ENCODE measurements at regions of chr1 and their contacts with region 1.

Region 1: GRCh38 chr1:155208541-155209311 is at the start of gene MTX1:
- DNase-seq: no peak
- ATAC-seq: peak; percentile 76
- H3K4me3 ChIP-seq: peak within 1 kb of the TSS; percentile 89 to 100
- H3K27ac ChIP-seq: peak within 1 kb of the TSS; percentile 90
- H3K4me1 ChIP-seq: peaks cover 22 to 33% of the 10 kb centered on the region in 2 experiments
- H3K27me3 ChIP-seq: no peaks in the 10 kb centered on the region
- CTCF ChIP-seq: no peak
- POLR2A ChIP-seq: no peak
- RAD21 ChIP-seq: no peak
- total RNA-seq, gene MTX1: 69.1 TPM

Region 2: GRCh38 chr1:155061381-155062150 is 147.2 kb before region 1 on chr1:
- CTCF ChIA-PET with region 1: no interaction called
- POLR2A ChIA-PET with region 1: no interaction called
- RAD21 ChIA-PET with region 1: no interaction called
- intact Hi-C with region 1: no loop called
- DNase-seq: peak; percentile 73
- ATAC-seq: peak; percentile 50
- H3K4me3 ChIP-seq: no peak overlapping the region
- H3K27ac ChIP-seq: peak overlapping the region; percentile 56
- H3K4me1 ChIP-seq: peaks cover 21 to 35% of the 10 kb centered on the region in 2 experiments
- H3K27me3 ChIP-seq: no peaks in the 10 kb centered on the region
- CTCF ChIP-seq: peak; percentile 82 to 99 (median 98)
- POLR2A ChIP-seq: no peak
- RAD21 ChIP-seq: peak; percentile 98

Region 3: DNA sequence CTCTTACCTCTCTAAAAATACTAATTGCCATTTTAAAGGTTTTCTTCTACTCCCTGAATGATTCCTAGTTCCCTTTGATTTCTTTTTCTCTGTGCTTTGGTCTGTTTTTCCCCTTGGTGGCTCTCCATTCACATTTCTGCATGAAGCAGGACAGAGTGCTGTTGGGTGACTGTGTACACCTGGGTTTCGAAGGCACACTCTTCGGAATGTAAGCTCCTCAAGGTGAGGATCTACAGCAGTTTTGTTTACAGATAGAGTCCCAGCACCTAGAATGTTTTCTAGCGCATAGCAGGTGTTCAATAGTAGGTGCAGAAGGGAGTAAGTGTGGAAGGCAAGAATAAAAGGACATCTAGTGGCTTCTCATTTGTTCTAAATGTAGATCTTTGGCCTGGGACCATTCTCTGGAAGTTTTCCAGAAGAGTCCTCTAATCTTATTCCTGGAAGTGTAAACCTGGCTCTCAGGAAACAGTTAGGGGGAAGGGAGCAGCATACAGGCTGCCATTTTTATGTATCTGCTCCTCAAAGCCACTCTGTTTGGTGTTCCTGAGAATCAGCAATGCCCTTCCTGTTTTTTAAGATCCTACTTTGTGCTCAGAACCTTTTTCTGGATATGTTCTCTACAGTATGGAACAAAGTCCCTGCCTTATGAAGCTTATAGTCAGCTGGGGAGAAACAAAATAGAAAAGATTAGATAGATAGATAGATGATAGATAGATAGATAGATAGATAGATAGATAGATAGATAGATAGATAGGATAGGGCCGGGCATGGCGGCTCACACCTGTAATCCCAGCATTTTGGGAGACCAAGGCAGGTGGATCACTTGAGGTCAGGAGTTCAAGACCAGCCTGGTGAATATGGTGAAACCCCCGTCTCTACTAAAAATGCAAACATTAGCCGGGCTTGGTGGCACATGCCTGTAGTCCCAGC is 103.9 kb before region 1 on chr1:
- CTCF ChIA-PET with region 1: no interaction called
- POLR2A ChIA-PET with region 1: no interaction called
- RAD21 ChIA-PET with region 1: no interaction called
- intact Hi-C with region 1: no loop called
- DNase-seq: no peak
- ATAC-seq: no peak
- H3K4me3 ChIP-seq: no peak overlapping the region
- H3K27ac ChIP-seq: no peak overlapping the region
- H3K4me1 ChIP-seq: no peaks in the 10 kb centered on the region
- H3K27me3 ChIP-seq: no peaks in the 10 kb centered on the region
- CTCF ChIP-seq: no peak
- POLR2A ChIP-seq: no peak
- RAD21 ChIP-seq: no peak

Region 4: GRCh38 chr1:155193275-155193990 is 15.3 kb before region 1 on chr1:
- CTCF ChIA-PET with region 1: interaction called, 16 read pairs
- POLR2A ChIA-PET with region 1: interaction called, 9 read pairs
- RAD21 ChIA-PET with region 1: no interaction called
- intact Hi-C with region 1: no loop called
- DNase-seq: peak; percentile 79
- ATAC-seq: peak; percentile 78
- H3K4me3 ChIP-seq: peak overlapping the region; percentile 65 to 66
- H3K27ac ChIP-seq: peak overlapping the region; percentile 97
- H3K4me1 ChIP-seq: peaks cover 15 to 36% of the 10 kb centered on the region in 2 experiments; a peak in 3 of 4 replicates
- H3K27me3 ChIP-seq: no peaks in the 10 kb centered on the region
- CTCF ChIP-seq: peak in 2 of 3 experiments; percentile 97 to 99; a peak in 4 of 6 replicates
- POLR2A ChIP-seq: peak; percentile 30
- RAD21 ChIP-seq: no peak

Region 5: GRCh38 chr1:155227261-155228095 is 18.8 kb after region 1 on chr1:
- CTCF ChIA-PET with region 1: interaction called, 4 read pairs
- POLR2A ChIA-PET with region 1: interaction called, 5 read pairs
- RAD21 ChIA-PET with region 1: no interaction called
- intact Hi-C with region 1: loop called (anchors 2 kb)
- DNase-seq: peak; percentile 97
- ATAC-seq: peak; percentile 95
- H3K4me3 ChIP-seq: peak overlapping the region; percentile 63 to 69
- H3K27ac ChIP-seq: peak overlapping the region; percentile 95
- H3K4me1 ChIP-seq: peaks cover 17 to 43% of the 10 kb centered on the region in 2 experiments
- H3K27me3 ChIP-seq: no peaks in the 10 kb centered on the region
- CTCF ChIP-seq: no peak
- POLR2A ChIP-seq: peak; percentile 91
- RAD21 ChIP-seq: no peak

Region 6: DNA sequence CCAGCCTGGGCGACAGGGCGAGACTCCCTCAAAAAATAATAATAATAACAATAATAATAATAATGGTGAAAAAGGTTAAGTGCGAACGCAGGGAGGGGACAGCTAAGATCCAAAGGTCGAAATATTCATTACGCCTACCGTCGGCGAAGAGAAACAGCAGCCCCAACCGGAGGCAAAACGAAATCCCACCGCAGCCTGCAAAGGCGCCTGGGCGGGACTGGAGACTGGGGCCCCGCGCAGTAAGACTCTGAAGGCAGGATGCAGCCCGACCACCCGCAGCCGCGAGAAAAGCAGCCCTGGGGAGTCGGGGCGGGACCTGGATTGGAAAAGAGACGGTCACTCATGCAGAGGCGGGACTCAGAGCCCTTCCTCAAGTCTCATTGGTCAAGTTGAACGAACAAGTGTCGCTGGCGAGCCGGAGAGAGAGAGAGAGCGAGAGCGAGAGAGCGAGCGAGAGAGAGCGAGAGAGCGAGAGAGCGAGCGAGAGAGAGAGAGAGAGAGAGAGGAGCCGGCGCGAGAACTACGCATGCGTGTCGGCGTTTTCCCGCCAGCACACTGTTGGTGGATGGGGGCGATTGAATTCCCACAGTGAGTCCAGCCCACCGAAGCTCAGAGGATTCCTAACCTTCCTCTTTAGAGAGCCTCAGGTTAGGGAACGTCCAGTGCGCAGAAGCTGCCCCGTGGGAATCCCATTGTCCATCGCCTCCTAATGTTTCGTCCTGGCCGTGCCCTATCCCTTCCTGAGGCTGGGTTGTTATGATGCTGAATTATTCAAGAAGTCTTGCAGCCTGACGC is 35.8 kb after region 1 on chr1:
- CTCF ChIA-PET with region 1: interaction called, 13 read pairs
- POLR2A ChIA-PET with region 1: interaction called, 3 read pairs
- RAD21 ChIA-PET with region 1: no interaction called
- intact Hi-C with region 1: loop called (anchors 5 kb)
- DNase-seq: peak; percentile 99
- ATAC-seq: peak; percentile 91
- H3K4me3 ChIP-seq: peak overlapping the region; percentile 69 to 74
- H3K27ac ChIP-seq: peak overlapping the region; percentile 78
- H3K4me1 ChIP-seq: peaks cover 16 to 46% of the 10 kb centered on the region in 2 experiments
- H3K27me3 ChIP-seq: no peaks in the 10 kb centered on the region
- CTCF ChIP-seq: peak in 1 of 3 experiments; percentile 14; a peak in 2 of 6 replicates
- POLR2A ChIP-seq: peak; percentile 95
- RAD21 ChIP-seq: no peak

Region 7: DNA sequence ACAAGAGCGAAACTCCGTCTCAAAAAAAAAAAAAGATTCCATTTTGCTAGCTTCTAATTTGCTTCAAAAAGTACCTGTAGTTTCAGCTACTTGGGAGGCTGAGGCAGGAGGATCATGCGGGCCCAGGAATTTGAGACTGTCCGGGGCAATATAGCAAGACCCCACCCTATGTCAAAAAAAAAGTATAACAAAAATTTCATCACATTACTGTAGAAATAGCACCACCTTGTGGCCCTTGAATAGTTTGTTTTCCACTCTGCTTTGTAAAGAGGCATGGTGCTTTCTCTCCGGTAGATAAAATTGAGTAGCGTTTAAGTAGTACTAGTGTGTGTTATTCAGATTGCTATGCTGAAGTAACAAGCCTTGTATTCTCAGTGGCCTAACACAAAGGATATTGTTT is 383.0 kb after region 1 on chr1:
- CTCF ChIA-PET with region 1: no interaction called
- POLR2A ChIA-PET with region 1: no interaction called
- RAD21 ChIA-PET with region 1: no interaction called
- intact Hi-C with region 1: loop called (anchors 5 kb)
- DNase-seq: peak; percentile 70
- ATAC-seq: peak; percentile 83
- H3K4me3 ChIP-seq: no peak overlapping the region
- H3K27ac ChIP-seq: no peak overlapping the region
- H3K4me1 ChIP-seq: no peaks in the 10 kb centered on the region
- H3K27me3 ChIP-seq: no peaks in the 10 kb centered on the region
- CTCF ChIP-seq: peak; percentile 40 to 84 (median 59)
- POLR2A ChIP-seq: no peak
- RAD21 ChIP-seq: peak; percentile 84

Region 8: DNA sequence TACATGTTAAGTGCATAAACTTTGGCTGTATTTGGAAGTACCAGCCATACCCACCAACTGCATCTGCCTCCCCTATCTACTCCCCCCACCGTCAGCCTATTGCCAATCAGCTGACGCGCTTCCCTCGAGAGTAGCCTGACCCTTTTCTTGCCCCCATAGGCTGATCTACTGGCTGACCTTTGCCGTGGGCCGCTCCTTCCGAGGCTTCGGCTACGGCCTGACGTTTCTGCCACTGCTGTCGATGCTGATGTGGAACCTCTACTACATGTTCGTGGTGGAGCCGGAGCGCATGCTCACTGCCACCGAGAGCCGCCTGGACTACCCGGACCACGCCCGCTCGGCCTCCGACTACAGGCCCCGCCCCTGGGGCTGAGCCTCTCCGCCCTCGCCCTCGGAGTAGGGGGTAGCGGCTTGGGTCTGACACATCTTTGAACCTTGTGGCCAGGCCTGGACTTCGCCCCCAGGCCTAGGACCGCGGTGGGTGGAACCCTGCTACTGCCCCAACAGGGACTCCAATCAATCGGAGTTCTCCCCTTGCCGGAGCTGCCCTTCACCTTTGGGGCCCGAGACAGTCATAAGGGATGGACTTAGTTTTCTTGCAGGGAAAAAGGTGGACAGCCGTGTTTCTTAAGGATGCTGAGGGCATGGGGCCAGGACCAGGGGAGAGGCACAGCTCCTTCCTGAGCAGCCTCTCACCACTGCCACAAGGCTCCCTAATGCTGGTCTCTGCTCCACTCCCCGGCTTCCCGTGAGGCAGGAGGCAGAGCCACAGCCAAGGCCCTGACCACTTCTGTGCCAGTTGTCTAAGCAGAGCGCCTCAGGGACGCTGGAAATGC is 1082.7 kb after region 1 on chr1:
- CTCF ChIA-PET with region 1: no interaction called
- POLR2A ChIA-PET with region 1: no interaction called
- RAD21 ChIA-PET with region 1: no interaction called
- intact Hi-C with region 1: no loop called
- DNase-seq: no peak
- ATAC-seq: no peak
- H3K4me3 ChIP-seq: no peak overlapping the region
- H3K27ac ChIP-seq: no peak overlapping the region
- H3K4me1 ChIP-seq: peaks cover 4 to 14% of the 10 kb centered on the region in 2 experiments; a peak in 3 of 4 replicates
- H3K27me3 ChIP-seq: no peaks in the 10 kb centered on the region
- CTCF ChIP-seq: no peak
- POLR2A ChIP-seq: no peak
- RAD21 ChIP-seq: no peak

Measured in HCT116 (cell line).